ENCODE measurements at regions of chr11 and their contacts with region 1.

Region 1: DNA sequence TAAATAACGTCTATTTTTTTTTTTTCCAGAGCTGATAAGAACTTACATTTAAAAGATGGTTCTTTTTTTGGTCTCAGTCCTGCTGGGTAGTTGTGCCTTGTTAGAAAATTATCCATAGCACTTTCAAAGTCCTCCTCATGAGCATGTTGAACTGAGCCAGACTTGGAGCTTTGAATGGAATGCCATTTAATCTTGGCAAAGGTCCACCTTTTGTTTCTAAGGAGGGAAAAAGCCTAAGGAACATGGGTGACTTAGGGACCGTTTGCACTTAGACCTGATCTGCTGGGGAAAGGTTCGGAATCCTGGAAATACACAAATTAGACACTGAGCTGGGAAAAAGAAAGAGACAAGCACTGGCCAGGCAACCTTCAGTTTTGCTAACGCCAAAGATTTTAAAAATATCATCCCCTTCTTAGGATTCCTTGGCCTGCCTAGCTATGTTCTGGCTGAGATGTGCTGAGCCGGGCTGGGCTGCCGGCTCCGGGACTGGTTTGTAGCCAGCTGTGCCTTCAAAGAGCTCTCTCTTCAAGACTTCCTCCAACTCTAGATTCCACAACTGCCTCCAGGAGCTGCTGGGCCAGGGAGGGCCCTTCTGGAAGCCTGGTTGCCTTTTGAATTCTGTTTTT is 67.4 kb downstream of the ENDOD1 start:
- DNase-seq: peak in 2 of 4 donors; percentile 45 to 58
- ATAC-seq: peak; percentile 64
- H3K4me3 ChIP-seq: no peak overlapping the region
- H3K27ac ChIP-seq: peak overlapping the region in 1 of 2 donors; percentile 34
- H3K4me1 ChIP-seq: peaks cover 4 to 18% of the 10 kb centered on the region in 2 donors
- H3K27me3 ChIP-seq: no peaks in the 10 kb centered on the region
- CTCF ChIP-seq: no peak

Region 2: DNA sequence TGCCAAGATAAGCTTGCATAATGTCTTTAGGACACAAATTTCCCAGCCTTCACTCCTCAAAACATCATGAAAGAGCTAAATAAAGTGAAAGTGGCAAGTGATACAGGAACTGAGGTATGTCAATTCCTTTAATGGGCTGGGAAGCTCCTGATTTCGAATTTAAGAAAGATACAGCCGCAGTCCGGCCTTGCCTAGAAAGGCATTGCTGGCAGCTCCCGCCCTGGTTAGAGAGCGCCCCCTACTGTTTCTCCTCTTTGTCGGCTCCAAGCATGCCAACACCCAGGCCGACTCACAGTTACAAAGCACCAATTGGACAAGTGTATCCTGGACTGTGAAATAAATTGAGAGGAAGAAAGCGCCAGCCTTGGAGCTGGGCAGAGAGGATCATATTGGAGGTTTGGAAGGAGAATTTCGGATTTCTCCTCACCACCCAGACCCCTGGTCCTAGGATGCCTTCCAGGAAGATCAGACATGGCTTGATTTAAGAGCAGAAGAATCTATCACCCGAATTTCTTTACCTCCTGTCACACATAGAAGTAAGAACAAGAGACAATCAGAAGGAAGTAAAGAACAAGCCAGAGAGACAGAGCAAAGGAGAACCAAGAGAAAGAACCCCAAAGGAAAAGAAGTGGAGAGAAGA is 548.6 kb after region 1 on chr11:
- intact Hi-C with region 1: loop called (anchors 5 to 10 kb)
- DNase-seq: peak; percentile 85 to 92 (median 86)
- ATAC-seq: peak; percentile 98
- H3K4me3 ChIP-seq: no peak overlapping the region
- H3K27ac ChIP-seq: no peak overlapping the region
- H3K4me1 ChIP-seq: peaks cover 16 to 21% of the 10 kb centered on the region in 2 donors
- H3K27me3 ChIP-seq: no peaks in the 10 kb centered on the region
- CTCF ChIP-seq: peak; percentile 88 to 91

Measured in left lung (tissue), 14 donors.